A673 (cell line): ENCODE measurements at regions of chr19 and their contacts with region 1.

Region 1: GRCh38 chr19:4669723-4670480 is at the start of gene MYDGF:
- DNase-seq: peak; percentile 95
- H3K4me3 ChIP-seq: peak within 1 kb of the TSS; percentile 92
- H3K27ac ChIP-seq: peak within 1 kb of the TSS; percentile 83
- H3K4me1 ChIP-seq: no peaks in the 10 kb centered on the region
- H3K27me3 ChIP-seq: no peaks in the 10 kb centered on the region
- CTCF ChIP-seq: no peak
- total RNA-seq, gene MYDGF: 128 TPM in 2 replicates

Region 2: DNA sequence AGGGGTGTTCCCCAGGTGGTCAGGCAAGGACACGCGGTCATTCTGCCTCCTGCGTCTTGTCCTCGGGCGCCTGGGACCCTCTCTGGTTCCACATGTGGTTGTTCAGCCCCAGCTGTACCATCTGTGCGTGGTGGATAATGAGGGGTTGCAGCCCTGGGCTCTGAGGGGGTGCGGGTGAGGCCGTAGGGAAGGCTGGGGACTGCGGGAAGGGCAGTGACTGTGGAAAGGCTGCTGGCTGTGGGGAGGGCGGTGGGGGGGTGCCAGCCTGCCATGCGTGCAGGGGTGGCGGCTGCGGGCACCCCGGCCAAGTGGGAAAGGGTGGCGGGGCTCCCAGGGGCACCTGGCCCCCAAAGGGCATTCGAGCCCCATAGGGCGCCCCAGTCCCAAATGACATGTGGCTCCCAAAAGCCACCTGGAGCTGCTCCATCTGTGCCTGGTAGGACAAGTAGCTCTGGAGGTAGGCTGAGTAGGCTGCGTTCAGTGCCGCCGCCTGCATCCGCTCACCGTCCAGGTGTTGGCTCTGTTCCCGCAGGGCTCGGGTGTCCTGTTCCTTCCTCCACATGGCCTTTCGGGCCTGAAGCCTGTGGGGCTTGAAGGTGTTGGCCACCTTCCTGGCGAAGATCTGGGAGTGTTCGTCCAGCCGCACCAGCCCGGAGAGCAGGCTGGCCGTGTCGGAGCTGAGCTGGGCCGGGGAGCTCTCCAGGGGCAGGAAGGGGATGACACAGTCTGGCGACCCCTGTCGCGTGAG is 146.5 kb after region 1 on chr19:
- CTCF ChIA-PET with region 1: no interaction called
- POLR2A ChIA-PET with region 1: no interaction called
- intact Hi-C with region 1: no loop called
- DNase-seq: no peak
- H3K4me3 ChIP-seq: no peak overlapping the region
- H3K27ac ChIP-seq: no peak overlapping the region
- H3K4me1 ChIP-seq: peaks cover 5% of the 10 kb centered on the region
- H3K27me3 ChIP-seq: no peaks in the 10 kb centered on the region
- CTCF ChIP-seq: no peak

Region 3: GRCh38 chr19:4968462-4969291 is 298.8 kb after region 1 on chr19 and contains the start of gene KDM4B:
- CTCF ChIA-PET with region 1: no interaction called
- POLR2A ChIA-PET with region 1: interaction called, 10 read pairs
- intact Hi-C with region 1: no loop called
- DNase-seq: peak; percentile 99
- H3K4me3 ChIP-seq: peak within 1 kb of the TSS; percentile 76
- H3K27ac ChIP-seq: peak within 1 kb of the TSS; percentile 61
- H3K4me1 ChIP-seq: peaks cover 14% of the 10 kb centered on the region
- H3K27me3 ChIP-seq: no peaks in the 10 kb centered on the region
- CTCF ChIP-seq: no peak
- total RNA-seq, gene KDM4B: 30.0 and 34.8 TPM in 2 replicates